Activated CD4-positive, alpha-beta T cell treated with anti-CD3 and anti-CD28 coated beads, Interleukin-2, amount 10 ng/mL, durations not matched to agents 24 days and 14 days (primary cell): ENCODE measurements at regions of chr10 and their contacts with region 1.

Region 1: GRCh38 chr10:75137533-75138438 is 26.3 kb downstream of the SAMD8 start:
- DNase-seq: no peak
- H3K4me3 Mint-ChIP-seq: no peak overlapping the region
- H3K27ac Mint-ChIP-seq: peak overlapping the region; percentile 58
- H3K4me1 Mint-ChIP-seq: peaks cover 29% of the 10 kb centered on the region
- H3K27me3 Mint-ChIP-seq: no peaks in the 10 kb centered on the region

Region 2: DNA sequence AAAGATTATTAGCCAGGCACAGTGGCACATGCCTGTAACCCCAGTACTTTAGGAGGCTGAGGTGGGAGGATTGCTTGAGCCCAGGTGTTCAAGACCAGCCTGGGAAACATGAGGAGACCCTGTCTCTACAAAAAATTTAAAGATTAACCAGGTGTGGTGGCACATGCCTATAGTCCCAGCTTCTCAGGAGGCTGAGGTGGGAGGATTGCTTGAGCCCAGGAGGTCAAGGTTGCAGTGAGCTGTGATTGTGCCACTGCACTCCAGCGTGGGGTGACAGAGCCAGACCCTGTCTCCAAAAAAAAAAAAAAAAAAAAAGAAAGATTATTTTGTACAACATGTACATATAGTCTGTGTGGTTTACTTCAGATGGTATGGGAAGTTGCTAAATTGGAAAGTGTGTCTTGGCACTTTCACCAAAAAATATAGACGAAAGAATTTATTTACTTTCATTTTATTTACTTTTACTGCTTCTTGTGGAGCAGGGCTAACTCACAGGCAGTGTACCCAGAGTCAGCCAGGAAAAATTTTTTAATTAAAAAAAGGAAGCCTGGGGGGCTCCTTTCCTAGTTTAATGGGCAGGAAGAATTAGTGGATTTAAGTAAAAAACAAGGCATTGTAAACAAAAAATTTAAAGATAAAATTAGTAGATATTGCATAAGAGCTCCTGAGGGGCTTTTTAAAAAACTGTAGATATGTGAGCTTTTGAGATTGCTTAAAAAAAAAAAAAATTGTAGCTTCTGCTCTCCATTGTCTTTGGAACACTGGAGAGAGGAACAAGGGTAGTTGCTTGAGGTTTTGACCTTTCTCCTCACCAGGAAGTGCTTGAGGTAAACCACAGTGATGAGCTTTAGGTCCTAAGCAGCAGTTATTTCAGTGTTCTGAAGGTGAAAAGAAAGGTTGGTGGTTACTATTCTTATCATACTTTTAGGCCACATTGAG is 28.2 kb after region 1 on chr10:
- intact Hi-C with region 1: loop called (anchors 2 kb)
- DNase-seq: peak; percentile 78
- H3K4me3 Mint-ChIP-seq: peak overlapping the region; percentile 82
- H3K27ac Mint-ChIP-seq: peak overlapping the region; percentile 91
- H3K4me1 Mint-ChIP-seq: peaks cover 26% of the 10 kb centered on the region
- H3K27me3 Mint-ChIP-seq: no peaks in the 10 kb centered on the region

Region 3: DNA sequence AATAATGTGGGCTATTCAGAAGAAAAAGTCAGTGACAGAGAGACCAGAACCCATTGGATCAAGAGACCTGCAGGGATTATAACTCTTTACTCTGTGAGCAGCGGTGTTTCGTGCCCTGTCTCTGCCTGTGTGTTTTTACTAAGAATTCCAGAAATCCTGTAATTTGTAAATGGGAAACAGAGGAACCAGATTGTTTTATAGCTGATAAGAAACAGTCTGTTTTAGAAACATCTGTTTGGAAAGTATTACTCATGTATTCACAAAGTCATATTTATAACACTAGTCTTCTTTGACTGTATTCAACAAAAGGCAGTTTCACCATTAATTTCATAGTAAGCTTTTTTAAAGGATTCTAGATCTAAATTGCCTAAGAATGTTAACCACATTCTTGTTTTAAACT is 42.8 kb after region 1 on chr10:
- intact Hi-C with region 1: loop called (anchors 5 kb)
- DNase-seq: no peak
- H3K4me3 Mint-ChIP-seq: no peak overlapping the region
- H3K27ac Mint-ChIP-seq: no peak overlapping the region
- H3K4me1 Mint-ChIP-seq: peaks cover 29% of the 10 kb centered on the region
- H3K27me3 Mint-ChIP-seq: no peaks in the 10 kb centered on the region